ENCODE measurements at regions of chr2 and their contacts with region 1.

Region 1: DNA sequence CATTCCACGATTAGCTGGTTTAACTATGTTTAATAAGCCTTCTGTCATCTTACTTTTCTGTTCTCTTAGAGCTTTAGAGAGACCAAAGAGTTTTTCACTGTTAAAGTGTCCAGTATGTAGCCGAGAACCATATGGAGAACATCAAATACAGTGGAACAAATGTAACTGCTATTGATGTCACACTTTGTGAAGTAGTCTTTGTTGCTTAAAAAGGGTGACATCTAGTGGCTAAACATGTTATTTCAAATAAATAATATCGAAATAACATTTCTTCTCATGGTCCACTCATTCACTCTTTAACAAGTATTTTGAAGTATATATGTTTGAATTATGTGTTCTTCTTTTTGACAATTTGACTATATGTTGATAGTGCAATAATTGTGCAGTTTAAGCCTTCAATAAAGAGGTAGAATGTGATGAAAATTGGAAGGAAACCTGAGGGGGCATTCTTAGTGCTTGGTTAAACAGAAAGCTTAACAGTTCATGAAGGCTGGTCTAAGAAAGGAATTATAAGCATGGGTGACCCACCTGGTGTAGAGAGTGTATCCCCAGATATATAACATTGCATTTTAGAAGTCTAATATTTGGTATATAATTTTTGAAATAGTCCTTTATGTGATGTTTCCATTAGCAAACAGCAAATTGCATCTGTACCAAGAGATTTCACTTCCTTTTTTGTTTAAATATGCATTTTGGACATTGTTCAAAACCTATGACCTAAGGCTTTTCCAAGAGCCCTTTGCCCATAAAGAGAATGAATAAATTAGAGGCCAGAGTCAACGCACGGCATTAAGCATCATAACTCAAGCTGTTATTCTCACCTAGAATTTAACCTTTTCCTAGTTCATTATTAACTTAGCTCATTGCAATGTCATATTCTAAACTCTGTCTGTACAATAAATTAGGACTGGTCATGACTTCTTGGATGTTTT is 112.1 kb downstream of the KYNU start:
- DNase-seq: peak; percentile 29
- H3K4me3 ChIP-seq: no peak overlapping the region
- CTCF ChIP-seq: peak; percentile 19

Region 2: GRCh38 chr2:142675398-142675797 is 314.1 kb before region 1 on chr2:
- in situ Hi-C with region 1: loop called (anchors 5 kb)
- DNase-seq: no peak
- H3K4me3 ChIP-seq: no peak overlapping the region
- CTCF ChIP-seq: no peak

Region 3: DNA sequence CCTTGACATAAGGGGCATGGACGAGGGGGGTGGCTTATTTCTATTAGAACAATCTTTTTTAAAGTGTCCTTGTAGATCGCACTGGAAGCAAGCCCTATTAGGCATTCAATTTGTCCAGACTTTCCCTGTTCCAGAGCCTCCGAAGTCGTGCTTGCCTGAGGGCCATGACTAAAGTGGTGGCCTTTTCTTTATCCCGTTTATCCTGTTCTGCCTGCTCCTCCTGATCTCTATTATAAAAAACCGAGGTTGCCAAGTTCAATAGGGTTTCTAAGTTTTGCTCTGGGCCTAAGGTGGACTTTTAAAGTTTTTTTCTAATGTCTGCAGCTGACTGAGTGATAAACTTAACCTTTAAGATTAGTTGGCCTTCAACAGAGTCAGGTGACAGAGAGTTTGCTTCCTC is 85.8 kb before region 1 on chr2:
- in situ Hi-C with region 1: no loop called
- DNase-seq: no peak
- H3K4me3 ChIP-seq: no peak overlapping the region
- CTCF ChIP-seq: no peak

Region 4: GRCh38 chr2:143410082-143410940 is 420.8 kb after region 1 on chr2:
- in situ Hi-C with region 1: no loop called
- DNase-seq: no peak
- H3K4me3 ChIP-seq: no peak overlapping the region
- CTCF ChIP-seq: no peak